Natural killer cell (primary cell): ENCODE measurements at regions of chr14 and their contacts with region 1.

Region 1: DNA sequence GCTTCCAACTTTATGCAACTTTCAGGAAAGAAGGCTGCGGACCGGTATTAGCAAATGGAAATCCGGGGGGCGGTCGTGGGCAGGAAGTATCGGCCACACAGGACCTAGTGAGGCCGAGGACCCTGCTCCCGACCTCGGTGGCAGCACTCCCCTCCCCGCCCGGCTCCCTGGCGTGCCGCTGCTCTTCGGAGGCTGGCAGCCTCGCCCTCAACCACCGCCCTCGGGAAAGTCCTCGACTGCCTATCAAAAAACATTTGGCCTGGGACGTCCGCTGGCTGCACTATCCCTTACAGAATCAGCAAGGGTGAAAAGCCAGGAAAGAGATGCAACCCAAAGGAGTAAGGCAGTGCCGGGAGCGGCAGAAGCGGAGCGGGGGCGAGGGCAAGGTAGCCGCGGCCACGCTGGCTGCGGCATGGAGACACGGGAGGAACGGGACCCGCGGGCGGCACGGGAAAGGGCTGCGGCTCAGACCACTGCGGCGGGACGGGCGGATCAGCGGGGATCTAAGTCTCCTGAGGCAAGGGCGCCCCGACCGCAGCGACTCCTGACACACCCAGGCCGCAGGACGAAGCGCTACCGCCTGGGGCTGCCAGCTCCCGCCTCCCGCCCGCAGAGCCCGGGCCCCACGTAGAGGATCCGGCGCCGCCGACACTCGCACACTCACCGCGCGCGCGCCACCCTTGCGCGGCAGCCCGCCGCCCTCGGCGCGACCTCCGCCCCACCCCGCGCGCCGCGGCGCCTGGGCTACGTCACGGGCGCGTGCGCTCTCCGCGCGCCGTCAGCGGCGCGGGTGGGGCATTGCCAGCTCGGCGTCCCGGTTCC is at the starts of genes BBOF1 and ENTPD5:
- DNase-seq: peak; percentile 83 to 95
- ATAC-seq: peak; percentile 92 to 98 (median 95)
- H3K4me3 ChIP-seq: peak within 1 kb of the TSS; percentile 97
- H3K4me3 Mint-ChIP-seq: peak within 1 kb of the TSS; percentile 94
- H3K27ac ChIP-seq: peak within 1 kb of the TSS; percentile 94
- H3K27ac Mint-ChIP-seq: peak within 1 kb of the TSS; percentile 88 to 91
- H3K4me1 ChIP-seq: peaks cover 14% of the 10 kb centered on the region
- H3K4me1 Mint-ChIP-seq: peaks cover 18 to 20% of the 10 kb centered on the region in 2 donors
- H3K27me3 ChIP-seq: no peaks in the 10 kb centered on the region
- H3K27me3 Mint-ChIP-seq: no peaks in the 10 kb centered on the region
- CTCF ChIP-seq: no peak
- total RNA-seq, gene BBOF1: 3.1 to 3.6 (median 3.2) TPM
- total RNA-seq, gene ENTPD5: 8.6 to 15.7 (median 13.0) TPM

Region 2: GRCh38 chr14:73491256-73492042 is 527.3 kb before region 1 on chr14:
- intact Hi-C with region 1: loop called (anchors 2 kb)
- DNase-seq: peak; percentile 76 to 84
- ATAC-seq: peak; percentile 76 to 81 (median 81)
- H3K4me3 ChIP-seq: peak overlapping the region; percentile 38
- H3K4me3 Mint-ChIP-seq: peak overlapping the region; percentile 92
- H3K27ac ChIP-seq: peak overlapping the region; percentile 84
- H3K27ac Mint-ChIP-seq: peak overlapping the region; percentile 86 to 88
- H3K4me1 ChIP-seq: peaks cover 24% of the 10 kb centered on the region
- H3K4me1 Mint-ChIP-seq: peaks cover 36 to 39% of the 10 kb centered on the region in 2 donors
- H3K27me3 ChIP-seq: no peaks in the 10 kb centered on the region
- H3K27me3 Mint-ChIP-seq: no peaks in the 10 kb centered on the region
- CTCF ChIP-seq: no peak

Region 3: DNA sequence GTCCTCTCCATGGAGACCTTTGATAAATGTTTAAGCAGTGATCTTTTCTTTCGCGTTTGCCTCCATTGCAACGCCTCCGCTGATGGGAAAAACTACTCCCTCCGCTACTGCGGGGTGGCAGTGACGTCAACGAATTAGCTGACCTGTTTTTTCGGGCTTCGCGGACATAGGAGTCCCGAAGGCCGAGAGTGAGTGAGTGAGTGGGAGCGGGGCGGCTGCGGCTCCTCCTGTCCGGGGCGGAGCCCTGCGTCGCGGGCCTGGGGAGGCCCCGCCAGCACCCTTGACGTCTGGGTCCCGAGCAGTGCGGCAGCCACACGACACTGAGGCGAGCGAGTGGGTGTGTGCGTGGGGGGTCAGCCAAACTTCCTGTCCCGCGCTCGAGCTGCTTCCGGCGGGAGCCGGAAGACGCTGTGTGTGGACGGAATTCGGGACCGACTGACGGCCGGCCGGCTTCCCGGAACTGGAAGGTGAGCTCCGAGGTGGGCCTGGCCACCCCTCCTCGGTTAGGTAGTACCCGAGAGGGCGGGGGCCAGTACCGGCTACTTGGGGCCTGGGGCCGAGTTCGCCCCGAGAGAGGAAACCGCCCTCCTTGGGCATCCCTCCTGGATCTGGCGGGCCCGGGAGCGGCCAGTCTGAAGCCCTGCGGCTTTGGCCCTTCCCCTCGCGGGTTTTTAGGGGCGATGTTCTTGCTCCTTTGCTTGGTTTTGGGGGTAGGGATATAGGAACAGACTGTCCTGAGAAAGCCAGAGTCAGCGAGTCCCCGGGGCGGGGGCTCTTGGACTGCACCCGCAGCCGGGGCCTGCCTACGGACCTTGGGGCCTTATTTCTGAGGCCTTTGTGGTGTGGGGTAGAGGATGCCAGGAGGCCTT is 132.1 kb before region 1 on chr14 and contains the start of gene ZNF410:
- intact Hi-C with region 1: loop called (anchors 10 kb)
- DNase-seq: peak; percentile 82 to 94
- ATAC-seq: peak; percentile 96 to 100 (median 98)
- H3K4me3 ChIP-seq: peak within 1 kb of the TSS; percentile 81
- H3K4me3 Mint-ChIP-seq: peak within 1 kb of the TSS; percentile 96
- H3K27ac ChIP-seq: peak within 1 kb of the TSS; percentile 97
- H3K27ac Mint-ChIP-seq: peak within 1 kb of the TSS; percentile 99
- H3K4me1 ChIP-seq: peaks cover 13% of the 10 kb centered on the region
- H3K4me1 Mint-ChIP-seq: peaks cover 39 to 50% of the 10 kb centered on the region in 2 donors
- H3K27me3 ChIP-seq: no peaks in the 10 kb centered on the region
- H3K27me3 Mint-ChIP-seq: no peaks in the 10 kb centered on the region
- CTCF ChIP-seq: no peak
- total RNA-seq, gene ZNF410: 111 to 118 (median 113) TPM

Region 4: GRCh38 chr14:73949744-73950734 is 68.8 kb before region 1 on chr14 and contains the starts of genes COQ6 and FAM161B:
- intact Hi-C with region 1: loop called (anchors 5 kb)
- DNase-seq: peak; percentile 84 to 98
- ATAC-seq: peak; percentile 89 to 97 (median 90)
- H3K4me3 ChIP-seq: peak within 1 kb of the TSS; percentile 85
- H3K4me3 Mint-ChIP-seq: peak within 1 kb of the TSS; percentile 99
- H3K27ac ChIP-seq: peak within 1 kb of the TSS; percentile 77
- H3K27ac Mint-ChIP-seq: peak within 1 kb of the TSS; percentile 96
- H3K4me1 ChIP-seq: peaks cover 15% of the 10 kb centered on the region
- H3K4me1 Mint-ChIP-seq: peaks cover 15 to 19% of the 10 kb centered on the region in 2 donors
- H3K27me3 ChIP-seq: no peaks in the 10 kb centered on the region
- H3K27me3 Mint-ChIP-seq: no peaks in the 10 kb centered on the region
- CTCF ChIP-seq: no peak
- total RNA-seq, gene COQ6: 20.8 to 24.0 (median 21.7) TPM
- total RNA-seq, gene FAM161B: 2.5 to 4.8 (median 3.1) TPM

Region 5: GRCh38 chr14:73977600-73978295 is 41.0 kb before region 1 on chr14:
- intact Hi-C with region 1: no loop called
- DNase-seq: no peak
- ATAC-seq: no peak
- H3K4me3 ChIP-seq: no peak overlapping the region
- H3K4me3 Mint-ChIP-seq: no peak overlapping the region
- H3K27ac ChIP-seq: no peak overlapping the region
- H3K27ac Mint-ChIP-seq: no peak overlapping the region
- H3K4me1 ChIP-seq: no peaks in the 10 kb centered on the region
- H3K4me1 Mint-ChIP-seq: no peaks in the 10 kb centered on the region
- H3K27me3 ChIP-seq: no peaks in the 10 kb centered on the region
- H3K27me3 Mint-ChIP-seq: no peaks in the 10 kb centered on the region
- CTCF ChIP-seq: no peak

Region 6: DNA sequence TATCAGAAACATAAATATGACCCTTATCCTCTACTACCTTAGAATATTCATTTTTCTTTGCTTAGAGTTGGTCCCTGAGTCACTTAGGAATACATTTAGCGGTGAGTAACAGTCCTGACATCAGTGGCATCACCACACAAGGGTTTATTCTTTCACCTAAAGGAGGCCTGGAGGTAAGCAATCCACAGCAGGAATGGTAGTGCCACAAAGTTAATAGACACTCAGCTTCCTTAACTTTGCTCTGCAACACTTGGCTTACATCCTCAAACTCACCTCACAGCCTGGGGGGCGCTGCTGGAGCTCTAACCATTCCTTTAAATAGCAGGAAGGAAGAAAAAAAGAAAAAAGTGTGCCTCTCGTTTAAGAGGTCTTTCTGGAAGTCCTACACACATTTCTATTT is 29.5 kb after region 1 on chr14:
- intact Hi-C with region 1: no loop called
- DNase-seq: no peak
- ATAC-seq: no peak
- H3K4me3 ChIP-seq: no peak overlapping the region
- H3K4me3 Mint-ChIP-seq: no peak overlapping the region
- H3K27ac ChIP-seq: no peak overlapping the region
- H3K27ac Mint-ChIP-seq: no peak overlapping the region
- H3K4me1 ChIP-seq: no peaks in the 10 kb centered on the region
- H3K4me1 Mint-ChIP-seq: no peaks in the 10 kb centered on the region
- H3K27me3 ChIP-seq: no peaks in the 10 kb centered on the region
- H3K27me3 Mint-ChIP-seq: no peaks in the 10 kb centered on the region
- CTCF ChIP-seq: no peak

Region 7: GRCh38 chr14:74084277-74085046 is 65.7 kb after region 1 on chr14 and contains the starts of genes ALDH6A1 and LIN52:
- intact Hi-C with region 1: loop called (anchors 2 kb)
- DNase-seq: peak; percentile 100
- ATAC-seq: peak; percentile 85 to 95 (median 86)
- H3K4me3 ChIP-seq: peak within 1 kb of the TSS; percentile 72
- H3K4me3 Mint-ChIP-seq: peak within 1 kb of the TSS; percentile 99
- H3K27ac ChIP-seq: peak within 1 kb of the TSS; percentile 69
- H3K27ac Mint-ChIP-seq: peak within 1 kb of the TSS; percentile 92 to 96
- H3K4me1 ChIP-seq: peaks cover 11% of the 10 kb centered on the region
- H3K4me1 Mint-ChIP-seq: peaks cover 39 to 50% of the 10 kb centered on the region in 2 donors
- H3K27me3 ChIP-seq: no peaks in the 10 kb centered on the region
- H3K27me3 Mint-ChIP-seq: no peaks in the 10 kb centered on the region
- CTCF ChIP-seq: no peak
- total RNA-seq, gene ALDH6A1: 8.5 to 9.6 (median 9.5) TPM
- total RNA-seq, gene LIN52: 10.6 to 15.0 (median 12.8) TPM